ENCODE measurements at regions of chr16 and their contacts with region 1.

Region 1: DNA sequence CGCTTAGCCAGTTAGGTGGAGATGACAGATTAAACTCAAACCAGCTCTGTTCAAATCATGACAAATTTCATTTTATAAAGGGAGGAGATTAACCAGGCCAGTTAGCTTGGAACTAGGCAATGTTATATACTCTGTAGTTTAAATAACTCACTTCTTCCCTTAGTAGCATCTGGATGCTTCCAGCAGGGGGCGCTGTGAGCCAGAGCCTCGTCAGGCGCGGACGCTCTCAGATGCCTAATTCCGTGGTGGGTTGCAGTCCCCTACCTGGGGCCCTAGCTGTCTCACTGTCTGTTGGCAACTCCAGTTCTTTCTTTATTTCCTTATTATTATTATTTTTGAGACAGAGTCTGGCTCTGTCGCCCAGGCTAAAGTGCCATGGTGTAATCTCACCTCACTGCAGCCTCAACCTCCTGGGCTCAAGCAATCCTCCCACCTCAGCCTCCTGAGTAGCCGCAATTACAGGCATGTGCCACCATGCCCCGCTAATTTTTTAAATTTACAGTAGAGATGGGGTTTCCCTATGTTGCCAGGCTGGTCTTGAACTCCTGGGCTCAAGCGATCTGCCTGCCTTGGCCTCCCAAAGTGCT is 17.3 kb upstream of the WFDC1 start:
- DNase-seq: peak; percentile 64
- H3K4me3 ChIP-seq: no peak overlapping the region
- H3K27ac ChIP-seq: no peak overlapping the region
- H3K4me1 ChIP-seq: no peaks in the 10 kb centered on the region
- H3K27me3 ChIP-seq: peaks cover 23% of the 10 kb centered on the region
- CTCF ChIP-seq: peak; percentile 92

Region 2: DNA sequence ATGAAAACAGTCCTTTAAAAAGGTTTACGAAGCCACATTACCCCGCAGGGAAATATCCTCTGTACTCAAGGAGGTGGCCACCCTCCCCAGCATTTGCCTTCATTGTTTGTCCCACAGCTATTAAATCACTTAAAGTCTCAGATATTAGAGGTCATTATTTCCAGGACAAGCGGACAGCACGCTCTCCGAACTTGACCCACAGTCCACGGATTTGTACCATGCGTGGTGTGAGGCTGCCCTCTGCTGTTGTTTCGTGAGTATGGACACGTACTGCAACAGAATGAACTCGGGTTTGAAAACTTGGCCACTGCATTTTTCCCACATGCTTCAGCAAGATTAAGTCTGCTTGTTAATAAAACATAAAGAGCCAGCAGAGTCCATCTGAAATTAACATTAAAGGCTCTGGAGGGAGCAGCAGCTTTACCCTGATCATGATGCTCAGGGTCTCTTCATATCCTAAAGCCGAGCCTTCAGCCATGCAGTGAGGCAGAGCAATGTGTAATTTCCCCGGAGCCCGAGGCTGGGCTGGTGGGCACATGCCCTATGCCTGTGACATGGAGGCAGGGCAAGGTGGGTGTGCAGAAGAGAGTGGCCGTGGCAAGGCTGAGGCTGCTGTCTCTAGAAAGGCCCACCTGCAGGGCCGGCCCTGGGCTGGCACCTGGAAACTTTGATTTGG is 207.4 kb after region 1 on chr16:
- intact Hi-C with region 1: loop called (anchors 2 kb)
- DNase-seq: peak; percentile 62
- H3K4me3 ChIP-seq: no peak overlapping the region
- H3K27ac ChIP-seq: no peak overlapping the region
- H3K4me1 ChIP-seq: peaks cover 8% of the 10 kb centered on the region
- H3K27me3 ChIP-seq: no peaks in the 10 kb centered on the region
- CTCF ChIP-seq: peak; percentile 82

Region 3: GRCh38 chr16:85027349-85027957 is 750.1 kb after region 1 on chr16 and contains the start of gene KIAA0513:
- intact Hi-C with region 1: no loop called
- DNase-seq: peak; percentile 93
- H3K4me3 ChIP-seq: peak within 1 kb of the TSS; percentile 86
- H3K27ac ChIP-seq: peak within 1 kb of the TSS; percentile 77
- H3K4me1 ChIP-seq: peaks cover 32% of the 10 kb centered on the region
- H3K27me3 ChIP-seq: no peaks in the 10 kb centered on the region
- CTCF ChIP-seq: peak; percentile 29
- total RNA-seq, gene KIAA0513: 10.0 TPM

Measured in left ventricle myocardium inferior (tissue), 1 donor.